CD8-positive, alpha-beta T cell (primary cell): ENCODE measurements at regions of chr2 and their contacts with region 1.

Region 1: GRCh38 chr2:86747711-86748639 is 27.9 kb downstream of the RMND5A start:
- DNase-seq: peak in 2 of 9 experiments; percentile 14 to 26
- ATAC-seq: no peak
- H3K4me3 ChIP-seq: no peak overlapping the region
- H3K4me3 Mint-ChIP-seq: no peak overlapping the region
- H3K27ac ChIP-seq: no peak overlapping the region
- H3K27ac Mint-ChIP-seq: no peak overlapping the region
- H3K4me1 ChIP-seq: peaks cover 7% of the 10 kb centered on the region
- H3K4me1 Mint-ChIP-seq: peaks cover 64% of the 10 kb centered on the region
- H3K27me3 ChIP-seq: no peaks in the 10 kb centered on the region
- H3K27me3 Mint-ChIP-seq: no peaks in the 10 kb centered on the region
- CTCF ChIP-seq: no peak

Region 2: DNA sequence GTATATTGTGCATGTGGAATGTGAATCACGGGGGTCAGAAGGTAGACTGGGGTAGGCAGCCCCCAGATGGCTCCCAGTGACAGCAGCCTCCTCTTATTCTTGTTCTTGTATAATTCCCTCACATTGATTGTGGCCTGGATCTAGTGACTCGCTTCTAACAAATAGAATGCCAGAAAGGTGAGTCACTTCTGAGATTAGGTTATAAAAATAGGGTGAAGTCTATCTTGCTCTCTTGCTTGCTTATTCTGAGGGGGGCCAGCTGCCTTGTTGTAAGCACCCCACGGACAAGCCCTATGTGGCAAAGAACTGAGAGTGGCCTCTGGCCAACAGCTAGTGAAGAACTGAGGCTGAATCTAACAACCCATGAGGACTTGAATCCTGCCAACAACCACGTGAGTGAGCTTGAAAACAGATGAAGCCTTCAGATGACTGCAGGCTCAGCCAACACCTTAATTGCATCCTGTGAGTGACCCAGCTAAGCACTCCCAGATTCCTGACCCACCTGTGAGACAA is 43.5 kb before region 1 on chr2:
- CTCF ChIA-PET with region 1: no interaction called
- POLR2A ChIA-PET with region 1: no interaction called
- intact Hi-C with region 1: loop called in 1 of 2 experiments (anchors 5 kb)
- DNase-seq: no peak
- ATAC-seq: no peak
- H3K4me3 ChIP-seq: no peak overlapping the region
- H3K4me3 Mint-ChIP-seq: no peak overlapping the region
- H3K27ac ChIP-seq: no peak overlapping the region
- H3K27ac Mint-ChIP-seq: no peak overlapping the region
- H3K4me1 ChIP-seq: no peaks in the 10 kb centered on the region
- H3K4me1 Mint-ChIP-seq: no peaks in the 10 kb centered on the region
- H3K27me3 ChIP-seq: no peaks in the 10 kb centered on the region
- H3K27me3 Mint-ChIP-seq: peaks cover 2% of the 10 kb centered on the region
- CTCF ChIP-seq: no peak

Region 3: GRCh38 chr2:86769838-86770237 is 21.9 kb after region 1 on chr2:
- CTCF ChIA-PET with region 1: interaction called, 26 read pairs
- POLR2A ChIA-PET with region 1: no interaction called
- intact Hi-C with region 1: loop called in 1 of 2 experiments (anchors 2 kb)
- DNase-seq: no peak
- ATAC-seq: no peak
- H3K4me3 ChIP-seq: no peak overlapping the region
- H3K4me3 Mint-ChIP-seq: no peak overlapping the region
- H3K27ac ChIP-seq: no peak overlapping the region
- H3K27ac Mint-ChIP-seq: no peak overlapping the region
- H3K4me1 ChIP-seq: peaks cover 8% of the 10 kb centered on the region
- H3K4me1 Mint-ChIP-seq: peaks cover 30% of the 10 kb centered on the region
- H3K27me3 ChIP-seq: no peaks in the 10 kb centered on the region
- H3K27me3 Mint-ChIP-seq: no peaks in the 10 kb centered on the region
- CTCF ChIP-seq: no peak

Region 4: DNA sequence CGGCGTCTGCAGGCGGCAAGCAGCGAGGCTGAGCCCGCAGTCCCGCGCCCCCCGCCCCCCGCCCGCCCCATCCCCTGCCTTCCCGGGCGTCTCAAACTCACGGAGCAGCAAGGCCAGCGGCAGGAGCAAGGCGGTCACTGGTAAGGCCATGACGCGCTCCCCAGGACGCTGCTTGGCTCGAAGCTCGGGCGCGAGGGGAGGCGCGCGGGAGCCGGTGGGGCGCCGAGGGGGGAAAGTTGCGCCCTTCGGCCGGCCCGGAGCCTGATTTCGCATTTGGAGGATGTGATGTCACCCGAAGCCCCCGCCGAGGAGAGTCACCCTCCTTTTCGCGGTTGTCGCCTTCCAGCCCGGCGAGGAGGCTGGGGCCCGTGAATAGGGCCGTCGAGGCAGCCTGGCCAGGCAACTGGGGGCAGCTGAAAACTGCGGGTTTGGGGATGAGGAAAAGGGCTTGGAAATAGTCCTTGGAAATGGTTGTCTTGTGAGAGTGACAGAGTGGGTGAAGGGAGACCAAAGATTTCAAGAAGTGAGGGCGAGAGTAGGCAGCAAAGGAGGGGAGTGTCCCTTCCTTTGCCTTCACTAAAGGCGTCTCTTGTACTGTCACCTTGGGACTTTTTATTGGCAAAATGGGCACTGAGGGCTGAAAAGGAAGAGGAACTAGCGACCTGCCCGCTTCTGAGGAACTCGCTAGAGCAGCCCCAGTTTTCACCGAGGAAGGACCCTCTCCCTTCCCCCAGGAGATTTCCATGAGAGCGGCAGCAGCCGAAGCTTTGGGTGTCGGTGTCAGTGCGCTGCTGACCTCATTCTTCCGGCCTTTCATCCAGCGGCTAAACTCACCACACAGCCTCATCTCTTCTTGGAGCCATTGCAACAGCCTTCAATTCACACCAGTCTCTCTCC is 42.9 kb after region 1 on chr2 and contains the start of gene CD8A:
- CTCF ChIA-PET with region 1: no interaction called
- POLR2A ChIA-PET with region 1: no interaction called
- intact Hi-C with region 1: no loop called
- DNase-seq: peak; percentile 60 to 93 (median 82)
- ATAC-seq: peak; percentile 23
- H3K4me3 ChIP-seq: peak within 1 kb of the TSS; percentile 93 to 98
- H3K4me3 Mint-ChIP-seq: peak within 1 kb of the TSS; percentile 95
- H3K27ac ChIP-seq: peak within 1 kb of the TSS; percentile 95 to 99
- H3K27ac Mint-ChIP-seq: peak within 1 kb of the TSS; percentile 99
- H3K4me1 ChIP-seq: peaks cover 69% of the 10 kb centered on the region
- H3K4me1 Mint-ChIP-seq: peaks cover 73% of the 10 kb centered on the region
- H3K27me3 ChIP-seq: no peaks in the 10 kb centered on the region
- H3K27me3 Mint-ChIP-seq: no peaks in the 10 kb centered on the region
- CTCF ChIP-seq: no peak
- total RNA-seq, gene CD8A: 502 to 503 TPM